Activated CD4-positive, alpha-beta T cell treated with anti-CD3 and anti-CD28 coated beads, Interleukin-2, amount 10 ng/mL, durations not matched to agents 7 days and 5 days (primary cell): ENCODE measurements at regions of chr14 and their contacts with region 1.

Region 1: DNA sequence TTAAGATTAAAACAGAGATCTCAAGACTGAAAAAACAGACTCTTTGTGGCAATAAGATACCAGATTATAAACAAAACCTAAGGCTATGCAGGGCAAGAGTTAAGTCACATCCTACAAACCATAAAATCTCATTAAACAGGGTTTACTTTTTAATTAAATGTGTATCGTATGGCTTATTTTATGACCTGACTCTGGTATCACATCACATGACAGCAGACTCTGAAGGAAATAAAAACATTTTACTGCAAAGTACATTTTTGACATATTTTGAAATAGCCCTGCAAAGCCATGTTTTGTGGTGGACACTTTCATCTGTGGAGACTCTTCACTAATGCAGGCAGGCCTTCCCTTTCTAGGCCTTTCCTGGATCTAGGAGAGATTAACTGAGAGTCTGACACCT is 327.6 kb upstream of the CLEC14A start:
- DNase-seq: no peak
- H3K4me3 Mint-ChIP-seq: no peak overlapping the region
- H3K27ac Mint-ChIP-seq: no peak overlapping the region
- H3K4me1 Mint-ChIP-seq: no peaks in the 10 kb centered on the region
- H3K27me3 Mint-ChIP-seq: no peaks in the 10 kb centered on the region

Region 2: DNA sequence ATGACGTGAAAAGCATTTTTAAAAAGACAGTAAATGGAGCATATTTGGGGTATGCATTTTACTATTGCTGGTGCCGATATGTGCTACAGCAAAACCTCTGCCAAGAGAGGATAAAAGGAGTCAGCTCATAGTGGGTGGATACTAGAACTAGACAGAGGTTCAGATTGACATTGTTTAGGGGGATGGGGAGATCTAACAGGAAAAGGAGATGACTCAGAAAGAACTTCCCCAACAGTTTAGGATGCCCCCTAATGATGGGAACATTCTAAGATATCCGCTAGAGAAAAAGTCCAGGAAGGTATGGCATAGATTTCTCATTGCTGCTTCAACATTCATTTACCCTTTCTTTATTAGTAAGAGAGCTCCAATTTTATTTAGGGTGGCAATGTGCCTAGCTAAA is 217.1 kb before region 1 on chr14:
- CTCF ChIA-PET with region 1: no interaction called
- POLR2A ChIA-PET with region 1: no interaction called
- DNase-seq: no peak
- H3K4me3 Mint-ChIP-seq: no peak overlapping the region
- H3K27ac Mint-ChIP-seq: no peak overlapping the region
- H3K4me1 Mint-ChIP-seq: no peaks in the 10 kb centered on the region
- H3K27me3 Mint-ChIP-seq: no peaks in the 10 kb centered on the region

Region 3: DNA sequence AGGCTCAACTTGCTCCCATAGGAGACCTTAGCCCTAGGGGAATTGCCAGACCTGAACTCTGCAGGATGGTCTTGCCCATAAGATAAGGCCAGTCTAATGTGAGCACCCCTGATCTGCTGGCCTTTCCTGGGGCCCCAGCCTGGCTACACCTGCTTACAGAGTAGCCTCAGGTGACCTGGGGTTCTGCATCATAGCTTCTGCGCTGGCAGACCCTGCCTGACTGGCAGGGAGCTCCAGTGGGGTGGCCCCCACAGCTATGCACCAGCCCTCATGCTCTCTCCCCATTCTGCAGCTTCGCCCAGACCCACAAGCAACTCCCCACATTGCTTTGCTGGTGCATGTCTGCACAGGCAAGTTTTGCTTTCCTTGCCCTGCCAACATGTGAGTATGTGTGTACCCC is 43.7 kb after region 1 on chr14:
- CTCF ChIA-PET with region 1: no interaction called
- POLR2A ChIA-PET with region 1: interaction called, 11 read pairs
- DNase-seq: no peak
- H3K4me3 Mint-ChIP-seq: no peak overlapping the region
- H3K27ac Mint-ChIP-seq: no peak overlapping the region
- H3K4me1 Mint-ChIP-seq: no peaks in the 10 kb centered on the region
- H3K27me3 Mint-ChIP-seq: no peaks in the 10 kb centered on the region